ENCODE measurements at regions of chr5 and their contacts with region 1.

Region 1: GRCh38 chr5:151659001-151659754 is 27.5 kb downstream of the SPARC start:
- DNase-seq: peak; percentile 81
- H3K4me3 ChIP-seq: peak overlapping the region in 1 of 2 experiments; percentile 27; a peak in 1 of 4 replicates
- H3K27ac ChIP-seq: peak overlapping the region in 1 of 2 experiments; percentile 97; a peak in 2 of 4 replicates
- H3K4me1 ChIP-seq: peaks cover 5 to 12% of the 10 kb centered on the region in 2 experiments; a peak in 2 of 4 replicates
- H3K27me3 ChIP-seq: no peaks in the 10 kb centered on the region
- CTCF ChIP-seq: peak; percentile 89
- EP300 ChIP-seq: no peak
- RAD21 ChIP-seq: peak; percentile 96

Region 2: DNA sequence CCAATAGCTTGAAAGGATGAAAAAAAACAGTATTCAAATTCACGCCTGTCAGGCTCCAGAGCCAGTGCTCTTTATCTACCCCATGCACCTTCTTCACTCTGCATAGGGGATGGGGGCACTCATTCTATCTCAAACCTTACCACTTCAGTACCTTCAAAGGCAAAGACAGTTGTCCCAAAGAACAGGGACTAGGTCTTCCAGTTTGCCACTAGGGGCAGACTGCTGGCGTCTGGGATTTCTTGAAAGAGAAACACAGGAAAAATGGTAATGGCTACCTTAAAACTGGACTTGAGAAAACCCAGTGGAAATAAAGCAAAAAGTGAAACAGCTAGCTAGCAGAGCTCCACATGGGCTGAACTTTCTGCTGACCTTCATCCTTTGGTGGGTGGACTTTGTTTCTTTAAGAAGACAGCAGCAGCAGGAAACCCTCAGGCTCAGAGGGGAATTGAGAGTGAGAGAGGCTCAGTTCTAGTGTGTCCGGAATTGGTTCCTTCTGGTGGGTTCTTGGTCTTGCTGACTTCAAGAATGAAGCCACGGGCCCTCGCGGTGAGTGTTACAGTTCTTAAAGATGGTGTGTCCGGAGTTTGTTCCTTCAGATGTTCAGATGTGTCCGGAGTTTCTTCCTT is 252.7 kb before region 1 on chr5:
- CTCF ChIA-PET with region 1: no interaction called
- POLR2A ChIA-PET with region 1: no interaction called
- DNase-seq: no peak
- H3K4me3 ChIP-seq: no peak overlapping the region
- H3K27ac ChIP-seq: no peak overlapping the region
- H3K4me1 ChIP-seq: no peaks in the 10 kb centered on the region
- H3K27me3 ChIP-seq: no peaks in the 10 kb centered on the region
- CTCF ChIP-seq: peak; percentile 58
- EP300 ChIP-seq: no peak
- RAD21 ChIP-seq: no peak

Region 3: GRCh38 chr5:151643388-151643787 is 15.8 kb before region 1 on chr5:
- CTCF ChIA-PET with region 1: interaction called, 18 read pairs
- POLR2A ChIA-PET with region 1: no interaction called
- DNase-seq: no peak
- H3K4me3 ChIP-seq: no peak overlapping the region
- H3K27ac ChIP-seq: no peak overlapping the region
- H3K4me1 ChIP-seq: no peaks in the 10 kb centered on the region
- H3K27me3 ChIP-seq: peaks cover 9% of the 10 kb centered on the region; the same call in 1 of the 2 replicates
- CTCF ChIP-seq: no peak
- EP300 ChIP-seq: no peak
- RAD21 ChIP-seq: no peak

Region 4: DNA sequence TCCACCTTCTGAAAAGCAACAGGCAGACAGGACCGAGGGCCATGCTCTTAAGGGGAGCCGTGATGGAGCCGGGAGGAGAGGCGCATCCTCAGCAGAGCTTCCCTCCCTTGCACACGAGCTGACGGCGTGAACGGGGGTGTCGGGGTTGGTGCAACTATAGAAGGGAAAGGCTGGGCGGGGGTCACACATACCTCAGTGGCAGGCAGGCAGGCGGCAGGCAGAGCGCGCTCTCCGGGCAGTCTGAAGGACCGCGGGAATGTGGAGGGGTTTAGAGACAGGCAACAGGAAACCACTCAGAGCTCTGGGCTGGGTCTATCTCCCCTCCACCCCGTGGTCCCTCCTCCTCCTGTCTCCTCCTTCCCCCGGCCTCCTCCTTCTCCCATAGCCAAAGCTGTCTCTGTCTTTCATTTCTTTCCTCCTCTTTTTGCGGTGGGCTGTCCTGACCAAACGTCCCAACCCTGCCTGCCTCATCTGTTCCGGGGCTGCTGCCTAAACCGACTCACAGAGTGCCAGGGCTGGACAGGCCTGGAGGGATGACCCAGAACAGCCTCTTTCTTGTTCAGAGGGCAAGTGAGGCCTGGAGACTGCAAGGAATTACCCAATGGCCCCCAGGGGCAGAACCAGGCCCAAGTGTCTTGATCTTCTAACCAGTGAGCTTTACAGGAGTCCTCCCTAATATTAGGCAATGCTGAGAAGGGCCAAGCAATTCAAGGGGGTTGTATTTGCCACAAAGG is 27.7 kb after region 1 on chr5 and contains the start of gene SPARC:
- CTCF ChIA-PET with region 1: interaction called, 11 read pairs
- POLR2A ChIA-PET with region 1: no interaction called
- DNase-seq: peak; percentile 72
- H3K4me3 ChIP-seq: peak within 1 kb of the TSS; percentile 68 to 83
- H3K27ac ChIP-seq: peak within 1 kb of the TSS; percentile 85 to 97
- H3K4me1 ChIP-seq: peaks cover 21 to 38% of the 10 kb centered on the region in 2 experiments
- H3K27me3 ChIP-seq: no peaks in the 10 kb centered on the region
- CTCF ChIP-seq: no peak
- EP300 ChIP-seq: no peak; a peak in 1 of 4 replicates
- RAD21 ChIP-seq: 0 out of 2 replicates have a peak, but pooled peaks have one; percentile 1
- polyA plus RNA-seq, gene SPARC: 987 and 1,115 TPM in 2 replicates

Region 5: DNA sequence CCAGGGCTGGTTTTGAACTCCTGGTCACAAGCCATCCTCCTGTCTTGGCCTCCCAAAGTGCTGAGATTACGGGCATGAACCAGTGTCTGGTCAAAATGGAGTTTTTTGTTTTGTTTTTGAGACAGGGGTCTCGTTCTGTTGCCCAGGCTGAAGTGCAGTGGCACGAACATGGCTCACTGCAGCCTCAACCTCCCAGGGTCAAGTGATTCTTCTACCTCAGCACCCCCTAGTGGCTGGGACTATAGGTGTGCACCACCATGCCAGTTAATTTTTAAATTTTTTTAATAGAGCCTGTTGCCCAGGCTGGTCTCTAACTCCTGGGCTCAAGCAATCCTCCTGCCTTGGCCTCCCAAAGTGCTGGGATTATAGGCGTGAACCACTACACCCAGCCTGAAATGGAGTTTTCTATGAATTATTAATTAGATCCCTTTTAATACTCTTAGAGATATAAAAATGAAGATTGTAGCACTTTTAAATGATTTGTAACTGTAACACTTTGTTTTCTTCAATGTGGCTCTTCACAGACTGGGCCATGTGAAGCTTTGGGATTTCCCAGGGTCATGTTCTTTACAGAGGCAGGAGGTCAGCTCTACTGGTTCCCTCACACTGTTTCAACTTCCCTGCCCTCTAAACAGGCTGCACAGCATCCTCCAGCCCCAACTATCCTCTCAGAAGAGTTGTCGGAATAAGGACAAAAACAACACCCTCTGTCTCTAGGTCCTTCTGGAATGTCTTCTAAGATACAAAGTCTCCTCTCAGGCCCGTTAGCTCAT is 60.2 kb after region 1 on chr5:
- CTCF ChIA-PET with region 1: interaction called, 35 read pairs
- POLR2A ChIA-PET with region 1: no interaction called
- DNase-seq: no peak
- H3K4me3 ChIP-seq: no peak overlapping the region
- H3K27ac ChIP-seq: peak overlapping the region in 1 of 2 experiments; percentile 60; a peak in 2 of 4 replicates
- H3K4me1 ChIP-seq: peaks cover 0 to 8% of the 10 kb centered on the region in 2 experiments; a peak in 1 of 4 replicates
- H3K27me3 ChIP-seq: no peaks in the 10 kb centered on the region
- CTCF ChIP-seq: peak; percentile 64
- EP300 ChIP-seq: no peak
- RAD21 ChIP-seq: peak; percentile 64

Region 6: DNA sequence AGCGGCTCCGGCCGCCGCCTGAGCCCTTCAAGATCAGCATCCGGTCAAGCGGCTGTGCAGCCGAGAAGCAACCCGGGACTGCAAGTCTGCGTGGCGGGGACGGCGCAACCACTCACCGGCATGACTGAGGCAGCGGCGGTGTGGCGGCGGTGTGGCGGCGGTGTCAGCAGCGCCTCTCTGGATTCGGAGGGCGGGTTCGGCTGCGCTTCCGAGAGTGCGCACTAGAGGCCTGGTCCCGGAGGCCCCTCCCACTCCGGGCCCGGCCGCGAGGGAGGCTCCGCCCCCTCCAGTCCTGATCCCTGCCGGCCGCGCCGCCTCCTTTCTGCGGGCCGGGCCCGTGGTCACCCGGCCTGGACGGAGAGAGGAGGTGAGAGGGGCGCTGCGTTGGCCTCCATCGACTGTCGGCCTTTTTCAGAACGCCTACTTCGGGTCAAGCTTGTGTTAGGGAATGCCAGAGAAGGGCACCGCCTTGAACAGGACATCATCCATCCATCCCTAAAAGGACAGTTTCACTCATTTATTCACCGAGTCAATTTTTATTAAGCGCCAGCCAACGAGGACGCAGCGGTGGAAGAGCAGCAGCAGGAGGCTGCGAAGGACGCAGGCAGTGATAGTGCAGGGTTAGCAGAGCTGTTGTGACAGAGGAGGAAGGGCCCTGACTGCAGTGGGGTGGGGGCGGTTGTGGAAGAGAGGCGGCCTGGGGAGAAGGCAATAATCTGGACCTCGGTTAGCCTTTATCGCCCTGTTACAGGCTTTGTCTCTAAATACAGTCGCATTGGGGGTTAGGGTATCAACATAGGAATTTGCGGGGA is 99.5 kb after region 1 on chr5 and contains the start of gene ATOX1:
- CTCF ChIA-PET with region 1: interaction called, 29 read pairs
- POLR2A ChIA-PET with region 1: no interaction called
- DNase-seq: peak; percentile 100
- H3K4me3 ChIP-seq: peak within 1 kb of the TSS; percentile 73 to 85
- H3K27ac ChIP-seq: peak within 1 kb of the TSS; percentile 59 to 72; a peak in 3 of 4 replicates
- H3K4me1 ChIP-seq: peaks cover 0 to 17% of the 10 kb centered on the region in 2 experiments; a peak in 1 of 4 replicates
- H3K27me3 ChIP-seq: no peaks in the 10 kb centered on the region
- CTCF ChIP-seq: no peak
- EP300 ChIP-seq: no peak
- RAD21 ChIP-seq: no peak
- polyA plus RNA-seq, gene ATOX1: 344 and 497 TPM in 2 replicates